OCI-LY7 (cell line): ENCODE measurements at regions of chr10 and their contacts with region 1.

Region 1: GRCh38 chr10:114470956-114471905 is 66.9 kb upstream of the AFAP1L2 start:
- DNase-seq: peak; percentile 87
- H3K4me3 ChIP-seq: no peak overlapping the region
- H3K27ac ChIP-seq: peak overlapping the region; percentile 39
- H3K4me1 ChIP-seq: peaks cover 27% of the 10 kb centered on the region
- CTCF ChIP-seq: peak; percentile 92

Region 2: GRCh38 chr10:114486938-114487814 is 15.9 kb after region 1 on chr10:
- CTCF ChIA-PET with region 1: no interaction called
- POLR2A ChIA-PET with region 1: interaction called, 6 read pairs
- intact Hi-C with region 1: loop called (anchors 1 kb)
- DNase-seq: no peak
- H3K4me3 ChIP-seq: no peak overlapping the region
- H3K27ac ChIP-seq: no peak overlapping the region
- H3K4me1 ChIP-seq: peaks cover 51% of the 10 kb centered on the region
- CTCF ChIP-seq: peak; percentile 73

Region 3: GRCh38 chr10:114526504-114527238 is 55.4 kb after region 1 on chr10:
- CTCF ChIA-PET with region 1: interaction called, 5 read pairs
- POLR2A ChIA-PET with region 1: interaction called, 35 read pairs
- intact Hi-C with region 1: loop called (anchors 1 kb)
- DNase-seq: peak; percentile 98
- H3K4me3 ChIP-seq: peak overlapping the region; percentile 89
- H3K27ac ChIP-seq: peak overlapping the region; percentile 91
- H3K4me1 ChIP-seq: peaks cover 35% of the 10 kb centered on the region
- CTCF ChIP-seq: no peak

Region 4: DNA sequence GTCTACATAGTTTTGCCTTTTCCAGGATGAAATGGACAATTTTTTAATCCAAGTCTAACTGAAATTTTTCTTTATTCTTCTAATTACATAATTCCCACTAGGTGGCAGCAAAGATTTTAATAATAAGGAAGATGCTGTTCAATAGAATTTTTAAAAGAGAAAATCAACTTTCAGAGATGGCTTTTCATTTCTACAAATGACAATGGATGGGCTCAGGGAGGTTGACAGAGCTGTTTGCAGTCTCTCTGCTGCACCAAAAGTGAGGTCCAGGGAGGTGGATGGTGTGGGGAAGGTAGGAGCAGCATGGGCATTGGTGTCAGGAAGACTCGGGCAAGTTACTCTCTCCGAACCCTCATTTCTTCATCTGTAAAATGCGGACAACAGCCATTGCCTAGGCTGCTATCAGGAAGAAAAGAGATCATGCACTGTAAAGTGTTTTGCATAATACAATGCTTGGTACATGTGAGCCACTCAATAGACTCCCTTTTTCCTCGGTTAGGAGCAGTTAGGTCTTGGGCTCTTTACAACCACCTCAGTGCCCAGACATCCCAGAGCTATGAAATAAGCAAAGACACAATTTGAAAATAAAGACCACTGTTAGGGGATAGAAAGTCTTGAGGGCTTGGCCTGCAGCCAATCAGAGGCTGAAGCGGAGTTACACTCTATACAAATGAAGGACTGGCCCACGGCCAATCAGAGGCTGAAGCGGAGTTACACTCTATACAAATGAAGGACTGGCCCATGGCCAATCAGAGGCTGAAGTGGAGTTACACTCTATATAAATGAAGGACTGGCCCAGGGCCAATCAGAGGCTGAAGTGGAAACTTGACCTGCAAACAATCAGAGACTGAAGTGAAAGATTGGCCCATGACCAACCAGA is 79.8 kb after region 1 on chr10:
- CTCF ChIA-PET with region 1: interaction called, 7 read pairs
- POLR2A ChIA-PET with region 1: interaction called, 26 read pairs
- intact Hi-C with region 1: loop called (anchors 1 kb)
- DNase-seq: peak; percentile 67
- H3K4me3 ChIP-seq: no peak overlapping the region
- H3K27ac ChIP-seq: no peak overlapping the region
- H3K4me1 ChIP-seq: peaks cover 16% of the 10 kb centered on the region
- CTCF ChIP-seq: peak; percentile 93

Region 5: DNA sequence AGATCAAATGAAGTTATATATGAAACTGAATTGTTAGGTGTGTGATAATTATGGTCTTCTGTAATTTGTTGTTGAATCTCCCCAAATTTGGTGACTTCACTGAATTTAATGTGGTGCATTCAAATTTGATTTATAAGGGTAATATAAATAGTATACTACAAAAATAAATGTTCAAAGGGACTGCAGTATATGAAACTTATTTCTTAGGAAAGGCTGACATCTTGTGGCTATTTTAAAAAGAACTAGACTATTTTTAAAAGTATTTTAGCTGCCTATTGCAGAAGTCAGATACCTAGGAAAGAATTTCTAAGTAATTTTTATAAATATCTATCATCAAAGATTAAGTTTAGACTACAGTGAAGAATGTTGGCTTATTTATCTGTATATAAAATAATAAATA is 658.5 kb after region 1 on chr10:
- CTCF ChIA-PET with region 1: no interaction called
- POLR2A ChIA-PET with region 1: no interaction called
- intact Hi-C with region 1: loop called (anchors 10 kb)
- DNase-seq: peak; percentile 45
- H3K4me3 ChIP-seq: no peak overlapping the region
- H3K27ac ChIP-seq: no peak overlapping the region
- H3K4me1 ChIP-seq: no peaks in the 10 kb centered on the region
- CTCF ChIP-seq: peak; percentile 80